ENCODE measurements at regions of chr2 and their contacts with region 1.

Region 1: GRCh38 chr2:70142590-70143313 is 48.1 kb downstream of the C2orf42 start:
- DNase-seq: peak; percentile 100
- ATAC-seq: peak; percentile 71
- H3K4me3 Mint-ChIP-seq: peak overlapping the region; percentile 86
- H3K27ac Mint-ChIP-seq: peak overlapping the region; percentile 100
- H3K4me1 Mint-ChIP-seq: peaks cover 65% of the 10 kb centered on the region
- H3K27me3 Mint-ChIP-seq: no peaks in the 10 kb centered on the region
- CTCF ChIP-seq: peak; percentile 87

Region 2: GRCh38 chr2:69914170-69914960 is 228.4 kb before region 1 on chr2:
- CTCF ChIA-PET with region 1: interaction called, 83 read pairs
- POLR2A ChIA-PET with region 1: interaction called, 56 read pairs
- intact Hi-C with region 1: loop called (anchors 2 kb)
- DNase-seq: peak; percentile 100
- ATAC-seq: peak; percentile 96
- H3K4me3 Mint-ChIP-seq: peak overlapping the region; percentile 86
- H3K27ac Mint-ChIP-seq: peak overlapping the region; percentile 92
- H3K4me1 Mint-ChIP-seq: peaks cover 37% of the 10 kb centered on the region
- H3K27me3 Mint-ChIP-seq: no peaks in the 10 kb centered on the region
- CTCF ChIP-seq: no peak

Region 3: GRCh38 chr2:70086838-70087701 is 55.7 kb before region 1 on chr2 and contains the start of gene PCBP1:
- CTCF ChIA-PET with region 1: interaction called, 215 read pairs
- POLR2A ChIA-PET with region 1: interaction called, 955 read pairs
- intact Hi-C with region 1: no loop called
- DNase-seq: peak; percentile 96
- ATAC-seq: peak; percentile 60
- H3K4me3 Mint-ChIP-seq: peak within 1 kb of the TSS; percentile 99
- H3K27ac Mint-ChIP-seq: peak within 1 kb of the TSS; percentile 98
- H3K4me1 Mint-ChIP-seq: peaks cover 53% of the 10 kb centered on the region
- H3K27me3 Mint-ChIP-seq: no peaks in the 10 kb centered on the region
- CTCF ChIP-seq: no peak
- total RNA-seq, gene PCBP1: 470 to 489 TPM

Region 4: DNA sequence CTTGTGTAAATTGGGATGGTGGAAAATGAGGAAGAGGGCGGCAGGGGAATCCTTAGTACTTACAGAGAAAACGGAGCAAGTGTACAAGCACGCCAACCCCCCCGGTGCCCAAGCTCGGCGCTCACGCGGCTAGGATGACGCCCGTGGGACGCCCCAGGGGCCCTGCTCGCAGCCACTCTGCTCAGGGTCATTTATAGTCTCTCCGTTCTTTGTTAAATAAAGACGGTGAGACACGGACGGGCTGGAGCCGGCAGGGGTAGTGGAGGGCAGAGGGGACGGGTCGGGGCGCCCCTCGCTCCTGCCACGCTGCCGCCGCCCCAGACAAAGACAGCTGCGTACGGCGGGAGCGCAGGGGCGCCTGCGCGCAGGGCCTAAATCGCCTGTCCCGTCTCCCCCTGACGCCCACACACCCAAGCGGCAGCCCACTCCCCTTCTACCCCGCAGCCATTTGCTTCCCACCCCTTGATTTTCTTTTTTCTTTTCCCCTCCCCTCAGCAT is 17.7 kb before region 1 on chr2:
- CTCF ChIA-PET with region 1: interaction called, 5 read pairs
- POLR2A ChIA-PET with region 1: interaction called, 123 read pairs
- intact Hi-C with region 1: no loop called
- DNase-seq: peak; percentile 67
- ATAC-seq: peak; percentile 49
- H3K4me3 Mint-ChIP-seq: peak overlapping the region; percentile 92
- H3K27ac Mint-ChIP-seq: peak overlapping the region; percentile 100
- H3K4me1 Mint-ChIP-seq: peaks cover 62% of the 10 kb centered on the region
- H3K27me3 Mint-ChIP-seq: no peaks in the 10 kb centered on the region
- CTCF ChIP-seq: no peak

Region 5: GRCh38 chr2:70190418-70191243 is 47.9 kb after region 1 on chr2 and contains the start of gene C2orf42:
- CTCF ChIA-PET with region 1: interaction called, 9 read pairs
- POLR2A ChIA-PET with region 1: interaction called, 17 read pairs
- intact Hi-C with region 1: loop called (anchors 5 kb)
- DNase-seq: peak; percentile 98
- ATAC-seq: peak; percentile 85
- H3K4me3 Mint-ChIP-seq: peak within 1 kb of the TSS; percentile 87
- H3K27ac Mint-ChIP-seq: peak within 1 kb of the TSS; percentile 99
- H3K4me1 Mint-ChIP-seq: peaks cover 19% of the 10 kb centered on the region
- H3K27me3 Mint-ChIP-seq: no peaks in the 10 kb centered on the region
- CTCF ChIP-seq: no peak
- total RNA-seq, gene C2orf42: 19.2 to 24.6 TPM